H1 (cell line): ENCODE measurements at regions of chr3 and their contacts with region 1.

Region 1: GRCh38 chr3:9792405-9793160 is at the starts of genes ARPC4 and TADA3:
- DNase-seq: peak; percentile 80 to 89
- H3K4me3 ChIP-seq: peak within 1 kb of the TSS; percentile 89 to 98 (median 95)
- H3K27ac ChIP-seq: peak within 1 kb of the TSS; percentile 98
- H3K4me1 ChIP-seq: peaks cover 0 to 8% (median 0%) of the 10 kb centered on the region in 4 experiments; a peak in 2 of 7 replicates
- H3K27me3 ChIP-seq: no peaks in the 10 kb centered on the region
- CTCF ChIP-seq: no peak
- EP300 ChIP-seq: peak in 1 of 2 experiments; percentile 97; a peak in 2 of 3 replicates
- POLR2A ChIP-seq: peak; percentile 57 to 79; a peak in 2 of 3 replicates
- RAD21 ChIP-seq: no peak
- total RNA-seq, gene ARPC4: 153 and 154 TPM in 2 replicates
- total RNA-seq, gene TADA3: 50.3 and 55.2 TPM in 2 replicates

Region 2: GRCh38 chr3:9749645-9750555 is 42.7 kb before region 1 on chr3 and contains the start of gene OGG1:
- CTCF ChIA-PET with region 1: interaction called, 6 read pairs
- POLR2A ChIA-PET with region 1: interaction called, 11 read pairs
- DNase-seq: peak; percentile 91 to 93
- H3K4me3 ChIP-seq: peak within 1 kb of the TSS; percentile 73 to 92 (median 88)
- H3K27ac ChIP-seq: peak within 1 kb of the TSS; percentile 88
- H3K4me1 ChIP-seq: peaks cover 0 to 9% (median 6%) of the 10 kb centered on the region in 4 experiments; a peak in 4 of 7 replicates
- H3K27me3 ChIP-seq: no peaks in the 10 kb centered on the region
- CTCF ChIP-seq: peak in 1 of 3 experiments; percentile 1; a peak in 1 of 4 replicates
- EP300 ChIP-seq: no peak
- POLR2A ChIP-seq: peak in 1 of 2 experiments; percentile 82; a peak in 2 of 3 replicates
- RAD21 ChIP-seq: 0 out of 4 replicates have a peak, but pooled peaks of 1 of the 2 experiments have one; percentile 3
- total RNA-seq, gene OGG1: 29.6 and 31.2 TPM in 2 replicates

Region 3: GRCh38 chr3:9769426-9770275 is 22.9 kb before region 1 on chr3 and contains the start of gene CAMK1:
- CTCF ChIA-PET with region 1: interaction called, 3 read pairs
- POLR2A ChIA-PET with region 1: interaction called, 14 read pairs
- DNase-seq: peak in 1 of 2 experiments; percentile 85
- H3K4me3 ChIP-seq: peak within 1 kb of the TSS; percentile 50 to 68 (median 52)
- H3K27ac ChIP-seq: no peak within 1 kb of the TSS
- H3K4me1 ChIP-seq: peaks cover 0 to 10% (median 2%) of the 10 kb centered on the region in 4 experiments; a peak in 1 of 7 replicates
- H3K27me3 ChIP-seq: peaks cover 1 to 28% (median 23%) of the 10 kb centered on the region in 4 experiments; a peak in 6 of 7 replicates
- CTCF ChIP-seq: no peak
- EP300 ChIP-seq: no peak
- POLR2A ChIP-seq: no peak
- RAD21 ChIP-seq: no peak
- total RNA-seq, gene CAMK1: 4.8 and 4.9 TPM in 2 replicates

Region 4: GRCh38 chr3:9779721-9780457 is 12.7 kb before region 1 on chr3:
- CTCF ChIA-PET with region 1: interaction called, 7 read pairs
- POLR2A ChIA-PET with region 1: interaction called, 10 read pairs
- DNase-seq: no peak
- H3K4me3 ChIP-seq: no peak overlapping the region
- H3K27ac ChIP-seq: no peak overlapping the region
- H3K4me1 ChIP-seq: no peaks in the 10 kb centered on the region
- H3K27me3 ChIP-seq: peaks cover 0 to 3% (median 0%) of the 10 kb centered on the region in 4 experiments; a peak in 1 of 7 replicates
- CTCF ChIP-seq: no peak
- EP300 ChIP-seq: no peak
- POLR2A ChIP-seq: no peak
- RAD21 ChIP-seq: no peak

Region 5: GRCh38 chr3:9803494-9803893 is 10.9 kb after region 1 on chr3:
- CTCF ChIA-PET with region 1: interaction called, 8 read pairs
- POLR2A ChIA-PET with region 1: interaction called, 71 read pairs
- DNase-seq: no peak
- H3K4me3 ChIP-seq: no peak overlapping the region
- H3K27ac ChIP-seq: no peak overlapping the region
- H3K4me1 ChIP-seq: peaks cover 0 to 1% (median 0%) of the 10 kb centered on the region in 4 experiments; a peak in 1 of 7 replicates
- H3K27me3 ChIP-seq: no peaks in the 10 kb centered on the region
- CTCF ChIP-seq: no peak
- EP300 ChIP-seq: no peak
- POLR2A ChIP-seq: no peak
- RAD21 ChIP-seq: no peak

Region 6: DNA sequence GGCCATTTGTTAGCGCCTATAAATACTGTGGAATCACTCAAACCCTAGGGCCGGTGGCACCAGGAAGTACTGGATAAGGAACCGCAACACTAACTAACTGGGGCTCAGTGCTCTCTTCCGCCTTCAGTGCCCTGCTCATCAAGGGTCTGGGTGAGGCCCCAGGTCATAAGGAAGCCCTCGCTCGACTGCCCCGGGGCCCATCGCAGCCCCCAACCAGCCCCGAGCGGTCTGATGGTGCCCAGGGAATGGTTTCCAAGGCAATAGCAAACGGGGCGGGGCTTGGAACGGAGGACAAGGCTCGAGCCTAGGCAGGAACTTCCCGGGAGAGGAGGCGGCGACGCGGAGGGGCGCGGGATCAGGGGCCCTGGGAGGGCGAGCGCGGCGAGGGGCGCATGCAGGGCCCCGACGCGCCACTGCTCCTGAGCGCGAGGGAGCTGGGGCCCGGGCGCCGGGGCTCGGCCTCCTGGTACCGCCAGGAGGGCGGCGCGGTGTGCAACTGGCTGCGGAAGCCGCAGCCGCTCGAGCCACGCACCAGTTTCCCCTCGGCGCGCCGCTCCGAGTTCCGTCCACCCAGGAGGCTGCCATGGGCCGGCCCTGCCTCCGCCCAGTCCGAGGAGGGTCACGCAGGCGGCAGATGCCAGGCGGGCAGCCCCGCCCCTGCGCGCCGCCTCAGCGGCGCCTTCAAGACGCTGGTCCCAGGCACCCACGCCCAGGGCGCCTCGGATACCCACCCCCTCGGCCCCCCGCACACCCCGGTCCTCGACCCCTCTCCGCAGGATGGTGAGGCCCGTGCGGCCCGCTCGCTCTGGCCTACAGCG is 17.2 kb after region 1 on chr3 and contains the start of gene TTLL3:
- CTCF ChIA-PET with region 1: interaction called, 8 read pairs
- POLR2A ChIA-PET with region 1: interaction called, 71 read pairs
- DNase-seq: peak in 1 of 2 experiments; percentile 88
- H3K4me3 ChIP-seq: peak within 1 kb of the TSS; percentile 50 to 72 (median 58)
- H3K27ac ChIP-seq: peak within 1 kb of the TSS; percentile 3; the same call in 1 of the 2 replicates
- H3K4me1 ChIP-seq: peaks cover 0 to 9% (median 2%) of the 10 kb centered on the region in 4 experiments; a peak in 3 of 7 replicates
- H3K27me3 ChIP-seq: peaks cover 0 to 11% (median 9%) of the 10 kb centered on the region in 4 experiments; a peak in 5 of 7 replicates
- CTCF ChIP-seq: no peak
- EP300 ChIP-seq: no peak
- POLR2A ChIP-seq: no peak; a peak in 1 of 3 replicates
- RAD21 ChIP-seq: no peak
- total RNA-seq, gene TTLL3: 4.3 and 5.9 TPM in 2 replicates